ENCODE measurements at regions of chr3 and their contacts with region 1.

Region 1: GRCh38 chr3:194583604-194584318 is 49.5 kb downstream of the TMEM44 start:
- DNase-seq: peak; percentile 83 to 98 (median 95)

Region 2: GRCh38 chr3:194486540-194487288 is 97.0 kb before region 1 on chr3 and contains the start of gene ATP13A3:
- intact Hi-C with region 1: loop called (anchors 5 kb)
- DNase-seq: peak; percentile 69 to 97 (median 93)

Region 3: DNA sequence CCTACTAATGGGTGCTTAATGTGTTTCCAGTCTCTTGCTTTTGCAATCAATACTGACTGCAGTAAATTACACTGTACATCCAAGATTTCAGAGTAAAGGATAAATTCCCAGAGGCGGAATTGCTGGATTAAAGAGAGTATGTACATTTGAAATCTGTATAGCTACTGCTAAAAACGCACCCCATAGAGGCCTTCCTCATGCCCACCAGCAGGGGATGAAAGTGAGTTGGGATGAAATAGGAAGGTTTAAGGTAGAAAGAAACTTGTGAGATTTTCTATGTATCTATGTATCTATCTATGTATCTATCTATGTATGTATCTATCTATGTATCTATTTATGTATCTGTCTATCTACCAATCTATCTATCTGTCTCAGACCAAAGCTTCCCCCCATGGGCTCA is 21.1 kb after region 1 on chr3:
- intact Hi-C with region 1: no loop called
- DNase-seq: no peak

Measured in head of caudate nucleus (tissue), 42 donors.